ENCODE measurements at regions of chr13 and their contacts with region 1.

Region 1: DNA sequence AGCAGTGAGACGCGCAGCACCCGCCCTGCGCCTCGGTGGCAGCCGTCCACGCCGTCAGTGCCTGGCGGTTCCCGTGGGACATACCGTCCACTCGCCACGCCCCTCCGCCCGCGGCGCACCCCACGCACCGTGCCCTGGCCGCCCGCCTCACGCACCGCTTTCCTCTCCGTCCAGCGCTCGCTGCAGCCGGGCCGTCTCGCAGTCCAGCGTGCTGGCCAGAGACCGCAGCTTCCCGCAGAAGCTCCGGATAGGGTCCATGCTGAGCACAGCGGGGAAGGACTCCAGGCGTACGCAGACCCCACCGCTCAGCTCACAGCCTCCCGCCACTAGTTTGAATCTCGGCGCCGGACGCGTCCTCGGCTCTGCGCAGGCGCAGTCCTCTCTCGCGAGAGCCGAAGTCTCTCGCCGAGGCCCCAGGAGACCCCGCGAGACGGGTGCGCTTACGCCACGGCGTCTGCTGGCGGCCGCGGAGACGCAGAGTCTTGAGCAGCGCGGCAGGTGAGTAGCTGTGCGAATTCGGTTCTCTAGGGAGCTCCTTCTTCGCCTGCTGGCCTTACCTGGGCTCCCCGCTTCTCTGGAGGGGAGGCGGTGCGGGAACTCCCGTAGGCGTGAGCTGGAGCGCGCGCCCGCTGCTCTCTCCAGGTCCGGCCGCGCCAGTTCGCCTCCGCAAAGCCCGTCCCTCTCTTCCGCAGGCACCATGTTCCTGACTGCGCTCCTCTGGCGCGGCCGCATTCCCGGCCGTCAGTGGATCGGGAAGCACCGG is at the starts of genes MRPL57 and SKA3:
- DNase-seq: peak; percentile 92
- H3K4me3 Mint-ChIP-seq: peak within 1 kb of the TSS; percentile 99
- H3K27ac Mint-ChIP-seq: peak within 1 kb of the TSS; percentile 97
- H3K4me1 Mint-ChIP-seq: peaks cover 24% of the 10 kb centered on the region
- H3K27me3 Mint-ChIP-seq: no peaks in the 10 kb centered on the region
- total RNA-seq, gene MRPL57: 19.0 to 21.0 TPM
- total RNA-seq, gene SKA3: 32.8 to 33.8 TPM

Region 2: GRCh38 chr13:20495082-20496023 is 681.0 kb before region 1 on chr13:
- CTCF ChIA-PET with region 1: no interaction called
- intact Hi-C with region 1: loop called (anchors 5 kb)
- DNase-seq: peak; percentile 81
- H3K4me3 Mint-ChIP-seq: no peak overlapping the region
- H3K27ac Mint-ChIP-seq: no peak overlapping the region
- H3K4me1 Mint-ChIP-seq: no peaks in the 10 kb centered on the region
- H3K27me3 Mint-ChIP-seq: no peaks in the 10 kb centered on the region

Region 3: DNA sequence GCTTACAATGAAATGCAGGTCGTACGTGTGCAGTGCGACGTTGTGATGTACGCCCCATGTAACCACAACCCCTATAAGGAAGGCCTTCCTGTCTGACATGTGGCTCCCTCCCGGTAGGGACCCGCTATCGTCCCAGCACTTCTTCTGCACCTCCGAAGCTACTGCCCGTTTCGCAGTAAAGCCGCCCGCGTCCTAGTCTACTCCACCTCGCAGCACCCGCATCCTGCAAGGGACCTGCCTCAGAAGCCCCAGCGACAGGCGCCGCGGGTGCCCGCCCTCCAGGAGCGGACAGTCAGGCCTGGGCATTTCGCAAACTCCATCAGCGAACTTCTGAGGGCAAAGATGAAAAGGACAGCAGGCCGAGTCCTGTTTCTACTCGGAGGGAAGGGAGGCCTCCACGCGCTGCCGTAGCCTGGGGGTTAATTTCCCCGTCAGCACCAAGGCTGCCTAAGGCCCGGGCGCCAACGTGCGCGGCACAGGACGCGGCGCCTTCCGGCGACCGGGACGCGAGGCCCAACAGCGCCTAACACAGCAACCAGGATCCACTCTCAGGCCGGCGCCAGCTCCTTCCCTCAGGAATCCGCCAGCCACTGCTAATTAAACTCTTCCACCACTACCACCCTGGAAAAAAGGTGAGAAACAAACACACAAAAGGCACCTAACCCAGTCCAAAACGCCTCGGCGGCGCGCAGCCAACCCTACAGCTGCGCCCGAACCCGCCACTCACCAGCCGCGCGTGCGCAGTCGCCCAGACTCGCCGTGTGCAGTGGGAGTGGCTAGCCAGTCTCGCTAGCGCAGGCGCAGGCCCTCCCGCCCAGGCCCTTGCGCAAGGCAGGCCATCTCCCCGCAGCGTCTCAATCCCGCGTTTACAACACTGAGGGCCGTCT is 403.0 kb before region 1 on chr13 and contains the start of gene EEF1AKMT1:
- CTCF ChIA-PET with region 1: no interaction called
- intact Hi-C with region 1: loop called (anchors 1 kb)
- DNase-seq: peak; percentile 96
- H3K4me3 Mint-ChIP-seq: peak within 1 kb of the TSS; percentile 88
- H3K27ac Mint-ChIP-seq: peak within 1 kb of the TSS; percentile 98
- H3K4me1 Mint-ChIP-seq: peaks cover 40% of the 10 kb centered on the region
- H3K27me3 Mint-ChIP-seq: no peaks in the 10 kb centered on the region
- total RNA-seq, gene EEF1AKMT1: 15.1 to 16.5 TPM

Region 4: GRCh38 chr13:21014502-21015170 is 161.8 kb before region 1 on chr13:
- CTCF ChIA-PET with region 1: no interaction called
- intact Hi-C with region 1: loop called (anchors 1 kb)
- DNase-seq: no peak
- H3K4me3 Mint-ChIP-seq: no peak overlapping the region
- H3K27ac Mint-ChIP-seq: no peak overlapping the region
- H3K4me1 Mint-ChIP-seq: peaks cover 15% of the 10 kb centered on the region
- H3K27me3 Mint-ChIP-seq: peaks cover 2% of the 10 kb centered on the region

Region 5: GRCh38 chr13:21234526-21234925 is 58.1 kb after region 1 on chr13:
- CTCF ChIA-PET with region 1: no interaction called
- intact Hi-C with region 1: no loop called
- DNase-seq: no peak
- H3K4me3 Mint-ChIP-seq: no peak overlapping the region
- H3K27ac Mint-ChIP-seq: no peak overlapping the region
- H3K4me1 Mint-ChIP-seq: peaks cover 11% of the 10 kb centered on the region
- H3K27me3 Mint-ChIP-seq: peaks cover 2% of the 10 kb centered on the region

Region 6: DNA sequence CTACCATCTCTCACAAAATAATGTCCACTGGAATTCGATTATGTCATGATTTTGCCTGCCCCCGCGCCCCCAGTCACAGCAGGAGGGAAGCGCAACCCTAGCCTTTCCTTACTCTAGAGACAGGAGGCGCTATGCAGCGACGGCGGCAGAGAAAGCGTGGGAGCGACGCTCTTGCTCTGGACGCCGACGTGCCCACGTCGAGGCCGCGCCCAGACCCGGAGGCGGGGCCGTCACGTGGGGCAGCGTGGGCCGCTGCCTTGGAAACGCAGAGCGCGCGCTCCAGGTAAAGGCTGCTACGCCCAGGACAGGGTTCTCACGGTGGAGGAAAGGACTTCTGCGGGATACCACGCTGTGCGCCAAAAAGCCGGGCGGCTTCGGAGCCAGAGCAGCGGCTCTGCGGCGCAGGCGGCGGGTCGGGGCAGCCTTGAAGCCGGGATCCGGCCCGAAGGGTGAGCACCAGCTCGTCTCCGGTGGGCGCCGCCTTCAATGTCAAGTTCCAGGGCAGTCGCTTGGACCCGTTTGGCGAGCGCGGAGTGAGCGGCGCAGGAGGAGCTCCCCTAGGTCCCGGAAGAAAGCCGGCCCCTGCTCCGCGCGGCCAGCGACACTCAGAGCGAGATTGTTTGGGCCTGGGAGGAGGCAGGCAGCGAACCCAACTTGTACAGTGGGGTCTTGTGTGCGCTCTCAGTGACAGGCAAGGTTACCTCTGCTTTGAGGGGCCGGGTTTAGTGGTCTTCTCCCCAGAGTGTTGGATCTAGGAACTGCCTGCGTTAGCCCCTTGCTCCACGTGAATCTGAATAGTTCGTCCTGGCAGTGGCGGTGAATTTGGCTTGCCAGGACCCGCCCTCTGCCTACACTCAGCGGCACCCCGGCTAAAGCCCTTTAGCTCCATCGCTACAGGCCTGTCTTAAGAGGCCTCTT is 121.8 kb after region 1 on chr13:
- CTCF ChIA-PET with region 1: interaction called, 4 read pairs
- intact Hi-C with region 1: loop called (anchors 2 kb)
- DNase-seq: peak; percentile 85
- H3K4me3 Mint-ChIP-seq: peak overlapping the region; percentile 81
- H3K27ac Mint-ChIP-seq: no peak overlapping the region
- H3K4me1 Mint-ChIP-seq: peaks cover 20% of the 10 kb centered on the region
- H3K27me3 Mint-ChIP-seq: no peaks in the 10 kb centered on the region

Region 7: DNA sequence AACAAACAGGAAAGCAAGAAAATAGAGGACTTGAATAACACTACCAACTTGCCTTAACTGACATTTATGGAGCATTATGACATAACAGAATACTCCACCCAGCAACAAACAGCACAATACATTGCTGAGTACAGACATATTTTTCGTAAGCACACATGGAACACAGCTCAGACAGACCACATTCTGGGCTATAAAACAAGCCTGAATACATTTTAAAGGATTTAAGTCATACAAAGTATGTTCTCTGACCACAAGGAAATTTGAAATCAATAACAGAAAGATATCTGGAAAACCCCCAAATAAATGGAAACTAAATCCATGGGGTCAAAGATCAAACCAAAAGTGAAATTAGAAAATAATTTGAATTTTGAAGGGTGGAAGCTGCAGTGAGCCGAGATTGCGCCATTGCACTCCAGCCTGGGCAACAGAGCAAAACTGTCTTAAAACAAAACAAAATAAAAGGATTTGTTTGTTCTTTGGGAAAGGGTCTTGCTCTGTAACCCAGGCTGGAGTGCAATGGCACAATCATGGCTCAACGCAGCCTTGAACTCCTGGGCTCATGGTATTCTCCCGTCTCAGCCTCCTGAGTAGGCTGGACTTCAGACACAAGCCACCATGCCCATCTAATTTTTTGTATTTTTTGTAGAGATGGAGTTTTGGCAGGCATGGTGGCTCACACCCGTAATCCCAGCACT is 277.1 kb after region 1 on chr13:
- CTCF ChIA-PET with region 1: no interaction called
- intact Hi-C with region 1: no loop called
- DNase-seq: no peak
- H3K4me3 Mint-ChIP-seq: no peak overlapping the region
- H3K27ac Mint-ChIP-seq: no peak overlapping the region
- H3K4me1 Mint-ChIP-seq: peaks cover 46% of the 10 kb centered on the region
- H3K27me3 Mint-ChIP-seq: no peaks in the 10 kb centered on the region

Region 8: DNA sequence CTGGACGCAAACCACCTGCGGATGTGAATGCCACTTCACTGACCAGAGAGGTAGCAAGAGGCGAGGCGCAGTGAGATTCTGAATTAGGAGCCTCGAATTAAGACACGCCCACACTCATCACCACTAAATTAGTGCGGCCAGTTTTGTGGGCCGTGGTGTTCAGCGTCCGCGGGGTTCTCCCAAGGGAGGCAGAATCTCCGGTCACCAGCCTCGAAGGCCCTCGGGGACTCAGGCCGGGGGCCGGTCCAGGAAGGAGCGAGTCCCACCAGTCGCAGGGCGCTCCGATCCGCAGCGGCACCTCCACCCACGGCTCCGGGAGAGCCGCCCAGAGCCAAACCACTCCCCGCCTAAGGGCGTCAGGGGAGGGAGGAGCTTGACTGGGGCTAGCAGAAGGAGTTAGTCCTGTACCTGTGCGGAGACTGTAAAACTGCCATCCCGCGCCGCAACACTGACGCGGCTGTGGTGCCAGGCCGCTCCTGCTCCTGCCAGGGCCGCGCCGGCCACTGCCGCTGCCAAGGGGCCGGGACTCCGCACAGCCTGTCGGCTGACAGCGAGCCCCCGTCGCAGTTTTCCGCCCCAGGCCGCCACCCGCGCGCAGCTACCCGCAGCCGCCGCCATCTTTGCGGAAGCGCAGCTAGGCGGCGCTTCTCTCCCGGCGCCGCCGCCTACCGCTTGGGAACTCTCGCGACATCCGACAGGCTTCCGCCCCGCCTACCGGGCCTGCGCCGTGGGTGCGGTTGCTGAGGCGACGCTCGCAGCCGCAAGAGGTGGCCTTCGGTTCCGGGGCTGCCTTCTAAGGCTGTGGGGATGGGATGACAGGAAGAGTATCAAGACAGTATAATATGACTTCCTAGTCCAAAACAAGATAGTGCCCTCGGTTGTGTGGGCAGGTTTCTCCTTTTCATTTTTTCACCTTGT is 427.4 kb after region 1 on chr13 and contains the start of gene MICU2:
- CTCF ChIA-PET with region 1: no interaction called
- intact Hi-C with region 1: loop called (anchors 2 kb)
- DNase-seq: peak; percentile 97
- H3K4me3 Mint-ChIP-seq: peak within 1 kb of the TSS; percentile 84
- H3K27ac Mint-ChIP-seq: peak within 1 kb of the TSS; percentile 90
- H3K4me1 Mint-ChIP-seq: peaks cover 28% of the 10 kb centered on the region
- H3K27me3 Mint-ChIP-seq: peaks cover 3% of the 10 kb centered on the region
- total RNA-seq, gene MICU2: 27.5 to 28.2 TPM

Region 9: DNA sequence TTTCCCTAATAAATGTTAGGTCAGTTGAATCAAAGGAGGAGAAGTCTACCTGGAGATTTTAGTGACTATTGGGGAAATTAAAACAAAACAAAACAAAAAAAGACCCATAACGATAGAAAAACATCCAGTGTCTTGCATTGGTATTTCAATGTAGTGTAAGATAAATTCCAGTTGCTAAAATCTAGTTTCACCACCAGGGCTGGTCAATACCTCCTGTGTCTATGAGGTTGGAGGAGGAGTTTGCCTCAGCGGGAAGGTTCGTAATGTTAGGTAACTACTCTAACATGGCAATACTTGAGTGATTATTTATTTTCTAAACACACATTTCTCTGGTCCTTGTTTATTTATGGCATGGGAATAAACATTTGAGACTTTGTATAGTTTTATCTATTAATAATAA is 977.6 kb after region 1 on chr13:
- CTCF ChIA-PET with region 1: no interaction called
- intact Hi-C with region 1: no loop called
- DNase-seq: no peak
- H3K4me3 Mint-ChIP-seq: no peak overlapping the region
- H3K27ac Mint-ChIP-seq: no peak overlapping the region
- H3K4me1 Mint-ChIP-seq: no peaks in the 10 kb centered on the region
- H3K27me3 Mint-ChIP-seq: no peaks in the 10 kb centered on the region